ENCODE measurements at regions of chr1 and their contacts with region 1.

Region 1: GRCh38 chr1:184843732-184844495 is 89.3 kb upstream of the EDEM3 start:
- DNase-seq: peak; percentile 21 to 89 (median 48)
- ATAC-seq: peak; percentile 48
- H3K4me3 ChIP-seq: no peak overlapping the region
- H3K4me3 Mint-ChIP-seq: no peak overlapping the region
- H3K27ac ChIP-seq: no peak overlapping the region
- H3K27ac Mint-ChIP-seq: peak overlapping the region; percentile 84
- H3K4me1 ChIP-seq: peaks cover 24% of the 10 kb centered on the region
- H3K4me1 Mint-ChIP-seq: peaks cover 40% of the 10 kb centered on the region
- H3K27me3 ChIP-seq: no peaks in the 10 kb centered on the region
- H3K27me3 Mint-ChIP-seq: no peaks in the 10 kb centered on the region
- CTCF ChIP-seq: no peak

Region 2: GRCh38 chr1:184866991-184867788 is 23.3 kb after region 1 on chr1:
- CTCF ChIA-PET with region 1: interaction called, 4 read pairs
- POLR2A ChIA-PET with region 1: interaction called, 11 read pairs
- intact Hi-C with region 1: loop called in 1 of 2 experiments (anchors 1 kb)
- DNase-seq: peak in 12 of 14 experiments; percentile 9 to 83 (median 35)
- ATAC-seq: peak; percentile 87
- H3K4me3 ChIP-seq: no peak overlapping the region
- H3K4me3 Mint-ChIP-seq: peak overlapping the region; percentile 43
- H3K27ac ChIP-seq: peak overlapping the region; percentile 22 to 35
- H3K27ac Mint-ChIP-seq: peak overlapping the region; percentile 73
- H3K4me1 ChIP-seq: peaks cover 7% of the 10 kb centered on the region
- H3K4me1 Mint-ChIP-seq: peaks cover 28% of the 10 kb centered on the region
- H3K27me3 ChIP-seq: no peaks in the 10 kb centered on the region
- H3K27me3 Mint-ChIP-seq: no peaks in the 10 kb centered on the region
- CTCF ChIP-seq: no peak

Region 3: GRCh38 chr1:185144233-185144632 is 300.3 kb after region 1 on chr1:
- CTCF ChIA-PET with region 1: no interaction called
- POLR2A ChIA-PET with region 1: no interaction called
- intact Hi-C with region 1: no loop called
- DNase-seq: no peak
- ATAC-seq: no peak
- H3K4me3 ChIP-seq: no peak overlapping the region
- H3K4me3 Mint-ChIP-seq: no peak overlapping the region
- H3K27ac ChIP-seq: no peak overlapping the region
- H3K27ac Mint-ChIP-seq: no peak overlapping the region
- H3K4me1 ChIP-seq: no peaks in the 10 kb centered on the region
- H3K4me1 Mint-ChIP-seq: no peaks in the 10 kb centered on the region
- H3K27me3 ChIP-seq: no peaks in the 10 kb centered on the region
- H3K27me3 Mint-ChIP-seq: no peaks in the 10 kb centered on the region
- CTCF ChIP-seq: no peak